RWPE1 (cell line): ENCODE measurements at regions of chr7 and their contacts with region 1.

Region 1: DNA sequence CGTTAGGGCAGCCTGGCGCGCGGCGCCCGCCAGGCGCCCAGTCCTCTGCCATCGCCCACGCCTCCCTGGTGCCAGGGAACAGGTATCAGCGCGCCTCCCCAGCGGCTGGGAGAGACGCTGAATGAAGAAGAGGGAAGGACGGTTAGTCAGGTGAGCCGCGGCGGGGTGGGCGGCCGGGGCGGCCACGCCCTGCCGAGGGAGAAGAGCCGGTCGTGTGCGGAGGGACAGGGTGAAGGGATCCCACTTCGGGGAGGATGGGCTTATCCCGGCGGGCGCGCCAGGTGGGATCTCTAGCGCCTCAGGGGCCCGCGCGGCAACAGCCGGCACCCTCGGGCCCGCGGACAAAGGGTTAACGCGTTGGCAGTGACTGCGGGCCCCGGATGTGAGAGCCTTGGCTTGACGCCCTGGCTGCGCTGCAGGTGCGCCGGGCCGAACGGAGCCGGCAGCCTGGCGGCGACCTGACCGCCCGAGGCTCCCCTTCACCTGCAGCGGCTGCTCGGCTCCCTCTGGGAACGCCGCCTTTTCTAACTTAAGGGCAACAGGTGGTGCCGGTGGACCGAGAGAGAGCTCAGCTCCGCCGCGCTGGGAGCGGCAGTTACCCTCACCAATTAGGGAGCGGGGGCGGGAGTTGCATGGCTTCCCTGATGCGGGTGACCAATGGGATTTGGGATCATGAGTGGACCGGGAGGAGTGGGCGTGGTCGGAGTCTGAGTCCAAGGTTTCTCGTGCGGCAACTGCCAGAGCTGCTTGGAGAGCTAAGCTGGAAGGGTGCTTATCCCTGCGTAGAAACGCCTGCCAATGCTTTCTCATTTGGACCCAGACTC is at the start of gene ARL4A:
- DNase-seq: peak; percentile 100
- H3K27ac ChIP-seq: peak within 1 kb of the TSS; percentile 96
- CTCF ChIP-seq: peak; percentile 77

Region 2: GRCh38 chr7:12814107-12814506 is 127.0 kb after region 1 on chr7:
- CTCF ChIA-PET with region 1: interaction called, 10 read pairs
- POLR2A ChIA-PET with region 1: no interaction called
- DNase-seq: peak; percentile 68
- H3K27ac ChIP-seq: no peak overlapping the region
- CTCF ChIP-seq: no peak

Region 3: DNA sequence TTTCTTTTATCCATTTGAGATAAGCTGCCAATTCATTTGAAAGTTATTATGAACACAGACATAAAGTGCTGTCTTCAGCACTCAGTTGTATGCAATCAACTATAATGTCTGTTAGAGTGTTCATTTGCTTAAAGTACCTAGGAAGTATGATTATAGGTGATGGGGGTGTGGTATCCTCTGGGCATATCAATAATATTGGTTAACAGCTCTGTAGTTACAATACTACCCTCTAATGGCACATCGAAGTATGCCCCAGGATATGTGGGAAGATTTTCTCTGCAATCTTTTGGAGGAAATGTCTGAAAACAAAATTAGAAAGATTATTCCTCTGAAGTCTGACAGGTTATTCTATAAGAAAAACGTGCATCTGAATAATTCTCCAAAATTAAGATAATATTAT is 430.0 kb after region 1 on chr7:
- CTCF ChIA-PET with region 1: interaction called, 13 read pairs
- POLR2A ChIA-PET with region 1: no interaction called
- DNase-seq: peak; percentile 35
- H3K27ac ChIP-seq: no peak overlapping the region
- CTCF ChIP-seq: peak; percentile 68